ENCODE measurements at regions of chr3 and their contacts with region 1.

Region 1: DNA sequence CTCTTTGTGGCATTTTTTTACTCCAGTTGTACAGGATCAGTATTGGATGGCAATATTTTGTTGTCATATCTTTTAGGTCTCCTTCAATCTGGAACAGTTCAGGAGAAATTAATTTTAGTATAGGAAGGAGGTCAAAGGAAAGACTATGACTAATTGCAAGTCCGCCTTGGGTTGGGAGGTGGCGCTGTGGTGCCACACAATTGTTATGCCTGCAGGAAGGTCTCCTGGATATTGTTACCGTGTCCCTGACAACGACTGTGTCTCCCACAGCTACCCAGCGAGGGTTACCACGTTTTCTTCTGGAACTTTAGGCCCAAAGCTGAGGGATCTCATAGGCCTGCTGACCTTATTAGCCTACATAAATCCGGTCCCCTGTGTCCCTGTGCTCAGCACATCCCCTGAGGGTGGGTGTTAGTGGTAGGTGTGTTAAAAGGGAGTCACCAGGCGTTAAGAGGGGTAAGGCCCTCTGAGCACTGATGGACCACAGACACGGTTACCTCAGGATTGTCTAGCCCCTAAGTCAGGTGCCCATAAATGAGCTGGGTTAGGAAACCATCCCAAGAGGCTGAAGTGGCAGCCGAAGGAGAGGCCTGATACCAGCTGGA is 31.5 kb downstream of the KCNAB1 start:
- DNase-seq: peak in 1 of 2 donors; percentile 87
- H3K4me3 ChIP-seq: no peak overlapping the region
- H3K27ac ChIP-seq: peak overlapping the region; percentile 27 to 45
- H3K4me1 ChIP-seq: peaks cover 11 to 22% of the 10 kb centered on the region in 2 donors
- H3K27me3 ChIP-seq: no peaks in the 10 kb centered on the region
- CTCF ChIP-seq: peak; percentile 70 to 85 (median 74)

Region 2: GRCh38 chr3:155846119-155846518 is 305.8 kb before region 1 on chr3:
- intact Hi-C with region 1: no loop called
- DNase-seq: no peak
- H3K4me3 ChIP-seq: no peak overlapping the region
- H3K27ac ChIP-seq: no peak overlapping the region
- H3K4me1 ChIP-seq: peaks cover 1 to 21% of the 10 kb centered on the region in 2 donors
- H3K27me3 ChIP-seq: no peaks in the 10 kb centered on the region
- CTCF ChIP-seq: no peak

Region 3: DNA sequence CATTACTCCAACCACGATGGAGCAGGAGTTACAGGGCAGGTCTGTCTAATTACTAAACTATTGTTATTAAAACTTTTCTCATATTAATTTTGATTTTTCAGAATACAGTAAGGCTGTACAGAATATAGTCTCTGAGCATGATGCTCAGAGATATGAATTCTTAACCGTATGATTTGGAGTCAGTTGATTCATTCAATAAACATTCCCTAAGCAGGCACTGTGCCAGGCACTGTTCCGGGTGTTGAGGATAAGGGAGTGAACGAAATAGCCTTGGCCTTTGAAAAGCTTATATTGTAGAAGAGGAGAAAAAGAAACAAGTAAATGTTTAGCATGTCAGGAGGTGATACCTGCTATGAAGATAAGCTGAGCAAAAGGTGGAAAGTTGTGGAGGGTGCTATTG is 155.8 kb after region 1 on chr3:
- intact Hi-C with region 1: loop called (anchors 5 kb)
- DNase-seq: peak; percentile 26 to 90
- H3K4me3 ChIP-seq: no peak overlapping the region
- H3K27ac ChIP-seq: peak overlapping the region in 1 of 2 donors; percentile 5
- H3K4me1 ChIP-seq: peaks cover 0 to 33% of the 10 kb centered on the region in 2 donors
- H3K27me3 ChIP-seq: no peaks in the 10 kb centered on the region
- CTCF ChIP-seq: no peak

Region 4: DNA sequence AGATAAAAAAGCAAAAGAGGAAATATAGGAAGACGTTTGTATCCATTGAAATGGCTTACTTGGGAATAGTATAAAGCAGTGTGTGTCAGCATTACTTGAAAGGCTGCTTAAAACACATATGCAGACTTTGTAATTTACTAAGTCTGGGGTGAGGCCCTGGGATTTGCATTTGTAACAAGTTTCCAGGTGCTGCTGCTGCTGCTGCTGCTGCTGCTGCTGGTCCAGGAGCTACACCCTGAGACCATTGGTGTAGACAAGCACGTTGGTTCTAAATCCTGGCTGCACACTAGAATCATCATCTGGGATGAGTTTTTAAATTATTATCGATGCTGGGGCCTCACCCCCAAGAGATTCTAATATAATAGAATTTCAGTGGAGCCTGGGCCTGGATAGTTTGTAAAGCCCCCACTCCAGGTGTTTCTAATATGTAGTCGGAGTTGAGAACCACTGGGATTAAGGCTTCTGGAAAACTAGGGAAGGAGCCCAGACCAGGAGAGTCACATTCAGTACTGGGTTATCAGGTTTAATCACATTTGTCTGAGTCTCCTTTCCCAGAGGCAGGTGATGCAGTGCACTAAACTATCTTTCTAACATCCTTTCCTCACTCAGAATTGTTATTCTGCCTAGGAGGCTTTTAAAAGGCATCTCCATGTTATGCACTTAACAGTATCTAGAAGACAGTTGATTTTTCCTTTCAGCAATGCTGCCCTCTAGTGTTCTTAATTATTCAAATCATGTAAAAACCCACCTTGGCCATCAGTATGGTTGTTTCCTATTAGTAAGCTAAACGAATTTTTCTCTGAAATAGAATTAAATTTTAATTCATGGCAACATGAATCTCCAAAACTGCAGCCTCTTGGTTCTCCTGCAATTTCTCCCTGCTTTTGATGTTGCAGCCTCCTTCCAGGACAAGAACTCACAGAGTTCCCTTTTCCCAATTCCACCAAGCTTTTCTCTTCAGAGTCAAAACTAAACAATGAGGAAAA is 357.6 kb after region 1 on chr3:
- intact Hi-C with region 1: loop called (anchors 1 kb)
- DNase-seq: no peak
- H3K4me3 ChIP-seq: no peak overlapping the region
- H3K27ac ChIP-seq: no peak overlapping the region
- H3K4me1 ChIP-seq: no peaks in the 10 kb centered on the region
- H3K27me3 ChIP-seq: no peaks in the 10 kb centered on the region
- CTCF ChIP-seq: peak; percentile 56 to 66 (median 59)

Region 5: GRCh38 chr3:157088601-157089454 is 936.9 kb after region 1 on chr3:
- intact Hi-C with region 1: loop called (anchors 5 kb)
- DNase-seq: peak; percentile 88 to 98
- H3K4me3 ChIP-seq: peak overlapping the region; percentile 74 to 75
- H3K27ac ChIP-seq: peak overlapping the region; percentile 97
- H3K4me1 ChIP-seq: peaks cover 12 to 31% of the 10 kb centered on the region in 2 donors
- H3K27me3 ChIP-seq: no peaks in the 10 kb centered on the region
- CTCF ChIP-seq: peak in 2 of 3 experiments; percentile 11 to 15

Region 6: GRCh38 chr3:157159762-157160657 is 1008.1 kb after region 1 on chr3 and contains the start of gene CCNL1:
- intact Hi-C with region 1: loop called (anchors 10 kb)
- DNase-seq: peak; percentile 86 to 99
- H3K4me3 ChIP-seq: peak within 1 kb of the TSS; percentile 86 to 100
- H3K27ac ChIP-seq: peak within 1 kb of the TSS; percentile 99 to 100
- H3K4me1 ChIP-seq: peaks cover 6 to 38% of the 10 kb centered on the region in 2 donors
- H3K27me3 ChIP-seq: no peaks in the 10 kb centered on the region
- CTCF ChIP-seq: no peak
- total RNA-seq, gene CCNL1: 241 TPM

Measured in ascending aorta (tissue), 2 donors.